H1 (cell line): ENCODE measurements at regions of chr5 and their contacts with region 1.

Region 1: GRCh38 chr5:100444961-100445360 is 90.2 kb upstream of the FAM174A start:
- DNase-seq: no peak
- H3K4me3 ChIP-seq: no peak overlapping the region
- H3K27ac ChIP-seq: no peak overlapping the region
- H3K4me1 ChIP-seq: no peaks in the 10 kb centered on the region
- H3K27me3 ChIP-seq: no peaks in the 10 kb centered on the region
- CTCF ChIP-seq: no peak
- EP300 ChIP-seq: no peak
- POLR2A ChIP-seq: no peak
- RAD21 ChIP-seq: no peak

Region 2: GRCh38 chr5:100430268-100431195 is 14.4 kb before region 1 on chr5:
- CTCF ChIA-PET with region 1: interaction called, 10 read pairs
- POLR2A ChIA-PET with region 1: no interaction called
- DNase-seq: peak in 1 of 2 experiments; percentile 77
- H3K4me3 ChIP-seq: no peak overlapping the region
- H3K27ac ChIP-seq: no peak overlapping the region
- H3K4me1 ChIP-seq: no peaks in the 10 kb centered on the region
- H3K27me3 ChIP-seq: no peaks in the 10 kb centered on the region
- CTCF ChIP-seq: peak; percentile 72 to 87 (median 85)
- EP300 ChIP-seq: no peak
- POLR2A ChIP-seq: no peak
- RAD21 ChIP-seq: peak; percentile 74 to 80